CD14-positive monocyte (primary cell): ENCODE measurements at regions of chr17 and their contacts with region 1.

Region 1: DNA sequence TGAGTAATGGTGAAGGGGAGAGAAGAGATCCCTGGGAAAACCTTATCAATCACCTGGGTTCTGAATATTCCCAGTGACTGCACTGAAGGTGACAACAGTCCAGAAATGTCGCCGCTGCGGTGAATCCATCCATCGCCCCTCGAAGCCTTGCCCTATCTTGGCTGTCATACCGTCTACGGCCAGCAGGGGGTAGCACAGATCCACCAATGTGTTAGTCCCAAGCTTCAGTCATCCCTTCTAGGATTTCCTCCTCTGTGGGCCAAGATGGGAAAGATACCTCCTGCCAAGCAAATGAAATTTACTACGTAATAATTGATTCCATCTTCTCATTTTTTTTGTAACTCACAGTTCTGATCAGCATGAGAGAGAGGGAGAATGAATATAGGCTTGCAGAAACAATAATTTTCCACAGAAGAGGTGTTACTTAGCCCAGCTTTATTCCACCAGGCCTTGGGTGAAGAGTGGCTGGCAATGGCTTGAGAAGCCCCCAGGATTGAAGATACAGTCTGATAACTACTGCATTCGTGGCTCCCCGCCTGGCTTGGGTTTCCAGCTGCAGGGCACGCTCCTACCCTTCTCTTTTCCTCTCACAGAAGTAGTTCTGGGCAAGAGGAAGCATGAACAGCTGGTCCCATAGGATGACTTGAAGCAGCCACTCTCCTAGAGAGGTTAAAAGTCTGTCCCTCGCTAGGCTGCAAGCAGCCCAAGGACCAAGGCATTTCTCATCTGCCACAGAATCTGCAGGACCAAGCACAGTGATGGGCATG is 2.6 kb upstream of the FMNL1 start:
- DNase-seq: peak; percentile 74 to 83 (median 80)
- H3K4me3 ChIP-seq: peak overlapping the region in 2 of 3 experiments; percentile 0 to 99
- H3K4me3 Mint-ChIP-seq: peak overlapping the region; percentile 86 to 90
- H3K27ac ChIP-seq: peak overlapping the region in 1 of 2 donors; percentile 24
- H3K27ac Mint-ChIP-seq: peak overlapping the region in 5 of 7 donors; percentile 58 to 84 (median 61)
- H3K4me1 ChIP-seq: peaks cover 32 to 35% of the 10 kb centered on the region in 2 donors
- H3K4me1 Mint-ChIP-seq: peaks cover 28% of the 10 kb centered on the region
- H3K27me3 ChIP-seq: no peaks in the 10 kb centered on the region
- H3K27me3 Mint-ChIP-seq: no peaks in the 10 kb centered on the region
- CTCF ChIP-seq: peak; percentile 93

Region 2: GRCh38 chr17:45235416-45236281 is 16.6 kb after region 1 on chr17:
- intact Hi-C with region 1: loop called (anchors 1 kb)
- DNase-seq: peak; percentile 77 to 85 (median 78)
- H3K4me3 ChIP-seq: peak overlapping the region in 1 of 3 experiments; percentile 20
- H3K4me3 Mint-ChIP-seq: peak overlapping the region in 1 of 2 donors; percentile 65
- H3K27ac ChIP-seq: peak overlapping the region; percentile 19 to 62
- H3K27ac Mint-ChIP-seq: peak overlapping the region; percentile 76 to 90 (median 86)
- H3K4me1 ChIP-seq: peaks cover 53% of the 10 kb centered on the region in 2 donors
- H3K4me1 Mint-ChIP-seq: peaks cover 56% of the 10 kb centered on the region
- H3K27me3 ChIP-seq: no peaks in the 10 kb centered on the region
- H3K27me3 Mint-ChIP-seq: peaks cover 0 to 4% (median 4%) of the 10 kb centered on the region in 3 donors
- CTCF ChIP-seq: peak; percentile 92

Region 3: DNA sequence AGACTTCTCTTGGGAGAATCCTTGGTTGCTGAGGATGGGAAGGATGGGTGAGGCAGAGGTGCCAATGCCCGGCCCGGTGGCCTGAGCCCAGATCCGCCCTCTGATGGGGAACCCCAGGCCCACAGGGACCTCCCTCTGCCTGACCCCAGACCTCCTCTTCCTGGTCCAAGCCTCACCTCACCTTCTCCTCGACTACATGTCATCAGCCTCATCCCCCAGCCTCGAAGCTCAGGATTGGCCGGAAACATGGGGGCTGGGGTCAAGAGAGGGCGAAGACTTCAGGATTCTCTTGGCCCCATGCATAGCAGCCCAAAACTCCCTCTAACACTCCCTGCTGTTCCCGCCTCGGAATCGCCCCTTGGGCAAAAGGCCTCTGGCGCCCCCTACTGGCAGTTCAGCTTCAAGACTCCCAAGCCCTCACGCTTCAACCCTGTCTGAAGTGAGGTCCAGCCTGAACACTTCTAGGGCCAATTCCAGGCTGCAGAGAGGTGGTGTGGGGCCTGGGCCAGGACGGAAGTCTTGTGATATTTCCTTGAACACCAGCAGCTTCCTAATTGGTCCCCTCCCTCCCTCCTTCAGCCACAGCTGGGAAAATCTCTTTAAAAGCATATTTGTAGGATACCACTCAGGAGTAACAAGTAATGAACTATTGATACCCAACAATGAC is 166.4 kb after region 1 on chr17:
- intact Hi-C with region 1: loop called (anchors 5 kb)
- DNase-seq: peak; percentile 77 to 85 (median 83)
- H3K4me3 ChIP-seq: no peak overlapping the region
- H3K4me3 Mint-ChIP-seq: peak overlapping the region in 1 of 2 donors; percentile 35
- H3K27ac ChIP-seq: no peak overlapping the region
- H3K27ac Mint-ChIP-seq: peak overlapping the region in 1 of 7 donors; percentile 19
- H3K4me1 ChIP-seq: peaks cover 17 to 19% of the 10 kb centered on the region in 2 donors
- H3K4me1 Mint-ChIP-seq: peaks cover 28% of the 10 kb centered on the region
- H3K27me3 ChIP-seq: no peaks in the 10 kb centered on the region
- H3K27me3 Mint-ChIP-seq: peaks cover 3 to 22% (median 7%) of the 10 kb centered on the region in 3 donors
- CTCF ChIP-seq: peak; percentile 98